Sigmoid colon (tissue), 7 donors: ENCODE measurements at regions of chr1 and their contacts with region 1.

Region 1: GRCh38 chr1:180863158-180863775 is 49.4 kb upstream of the KIAA1614 start:
- DNase-seq: no peak
- H3K4me3 ChIP-seq: no peak overlapping the region
- H3K27ac ChIP-seq: no peak overlapping the region
- H3K4me1 ChIP-seq: no peaks in the 10 kb centered on the region
- H3K27me3 ChIP-seq: no peaks in the 10 kb centered on the region
- CTCF ChIP-seq: peak; percentile 59 to 70 (median 64)
- EP300 ChIP-seq: no peak
- POLR2A ChIP-seq: no peak

Region 2: DNA sequence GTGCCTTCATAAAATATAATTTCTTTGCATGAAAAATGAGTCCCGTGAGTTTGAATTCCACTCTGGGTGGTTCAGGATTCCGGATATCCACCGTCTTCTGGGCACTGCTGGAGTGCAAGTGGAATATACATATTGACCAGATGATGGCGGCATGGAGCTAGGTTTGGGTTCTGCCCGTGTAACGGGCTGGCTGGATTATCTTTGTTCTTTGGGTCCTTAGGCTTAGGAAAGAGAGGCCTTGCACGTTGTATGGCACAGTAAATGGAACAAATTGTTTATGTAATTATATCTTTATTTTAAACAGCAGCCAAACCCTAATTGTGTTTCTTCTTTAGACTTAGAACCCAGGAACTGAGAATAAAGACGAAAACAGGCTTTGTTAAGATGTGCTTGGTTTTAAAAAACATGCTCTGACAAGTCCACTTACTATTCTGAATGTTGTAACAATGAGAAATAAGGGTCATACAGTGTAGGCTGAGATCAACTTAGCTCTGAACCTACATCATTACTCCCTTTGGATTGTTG is 347.3 kb before region 1 on chr1:
- intact Hi-C with region 1: loop called (anchors 5 kb)
- DNase-seq: peak; percentile 86
- H3K4me3 ChIP-seq: no peak overlapping the region
- H3K27ac ChIP-seq: no peak overlapping the region
- H3K4me1 ChIP-seq: peaks cover 0 to 9% (median 0%) of the 10 kb centered on the region in 4 donors
- H3K27me3 ChIP-seq: no peaks in the 10 kb centered on the region
- CTCF ChIP-seq: peak; percentile 46 to 79 (median 72)
- EP300 ChIP-seq: no peak
- POLR2A ChIP-seq: no peak

Region 3: DNA sequence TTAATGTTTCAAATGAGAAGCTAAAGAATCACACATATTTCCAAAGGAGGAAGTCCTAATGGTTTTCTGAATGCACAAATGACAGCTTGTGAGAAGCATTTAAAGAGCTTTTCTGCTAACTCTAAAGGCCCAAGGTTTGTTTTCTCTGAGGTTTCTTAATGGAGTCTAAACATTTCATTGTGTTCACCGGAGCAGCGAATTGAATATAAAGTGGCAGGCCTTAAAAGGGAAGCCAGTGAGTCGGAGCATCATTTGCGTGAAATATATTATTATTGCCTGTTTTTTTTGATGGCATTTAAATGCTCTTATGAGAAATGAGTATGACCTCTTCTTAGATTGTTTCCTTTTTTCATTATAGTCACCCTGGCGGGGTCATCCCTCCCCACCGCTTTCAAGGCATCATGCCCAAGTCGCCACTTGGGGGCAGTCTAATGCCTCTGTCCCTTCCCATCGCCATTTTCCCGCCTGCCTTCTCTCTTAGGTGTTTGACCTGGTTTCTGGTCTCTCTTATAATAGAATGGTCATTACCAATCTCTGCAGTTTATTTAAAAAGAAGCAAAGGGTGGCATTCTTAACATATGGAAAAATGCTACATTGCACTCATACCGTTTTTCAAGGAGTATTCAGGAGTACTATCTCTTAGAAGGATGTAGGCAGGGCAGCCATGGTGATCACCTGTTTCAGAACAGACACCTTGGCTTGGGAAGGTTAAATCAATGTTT is 329.8 kb before region 1 on chr1:
- intact Hi-C with region 1: loop called (anchors 5 kb)
- DNase-seq: peak; percentile 78
- H3K4me3 ChIP-seq: no peak overlapping the region
- H3K27ac ChIP-seq: no peak overlapping the region
- H3K4me1 ChIP-seq: no peaks in the 10 kb centered on the region
- H3K27me3 ChIP-seq: no peaks in the 10 kb centered on the region
- CTCF ChIP-seq: peak; percentile 55 to 81 (median 68)
- EP300 ChIP-seq: no peak
- POLR2A ChIP-seq: no peak

Region 4: DNA sequence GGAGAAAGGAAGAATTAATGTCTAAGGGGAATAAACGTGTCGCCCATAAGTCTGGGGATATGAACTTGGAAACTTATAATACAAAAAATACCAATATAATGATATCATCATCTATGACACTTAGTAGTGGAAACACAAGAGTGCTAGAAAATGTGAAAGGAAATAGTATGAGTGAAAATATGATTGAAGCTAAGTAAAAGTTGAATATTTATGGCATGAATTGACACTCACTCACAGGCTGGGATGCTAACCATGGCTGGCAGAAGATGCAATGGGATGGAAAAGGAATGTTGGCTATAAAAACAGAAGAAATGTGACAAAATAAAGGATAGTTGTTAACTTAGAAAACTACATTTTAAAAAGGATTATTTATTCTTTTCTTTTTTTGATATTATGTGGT is 111.3 kb before region 1 on chr1:
- intact Hi-C with region 1: no loop called
- DNase-seq: no peak
- H3K4me3 ChIP-seq: no peak overlapping the region
- H3K27ac ChIP-seq: no peak overlapping the region
- H3K4me1 ChIP-seq: no peaks in the 10 kb centered on the region
- H3K27me3 ChIP-seq: no peaks in the 10 kb centered on the region
- CTCF ChIP-seq: no peak
- EP300 ChIP-seq: no peak
- POLR2A ChIP-seq: no peak

Region 5: DNA sequence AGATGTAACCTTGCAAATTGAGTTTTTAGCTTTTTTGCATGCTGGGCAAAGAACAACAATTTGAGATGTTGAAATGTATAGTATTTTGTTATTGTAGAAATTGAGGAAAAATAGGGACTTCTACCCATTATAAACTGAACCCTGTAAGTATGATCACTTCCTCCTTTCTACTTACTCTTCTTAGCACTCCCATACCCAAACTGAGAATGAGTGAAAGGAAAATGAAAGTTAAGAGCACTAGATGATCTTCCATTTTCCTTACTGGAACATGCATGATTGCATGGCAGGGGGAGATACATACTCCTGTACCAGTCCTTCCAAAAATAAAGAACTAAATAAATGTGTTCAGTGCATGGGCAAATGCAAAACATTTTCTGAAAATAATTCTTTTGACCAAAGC is 58.0 kb before region 1 on chr1:
- intact Hi-C with region 1: no loop called
- DNase-seq: no peak
- H3K4me3 ChIP-seq: no peak overlapping the region
- H3K27ac ChIP-seq: no peak overlapping the region
- H3K4me1 ChIP-seq: no peaks in the 10 kb centered on the region
- H3K27me3 ChIP-seq: no peaks in the 10 kb centered on the region
- CTCF ChIP-seq: no peak
- EP300 ChIP-seq: no peak
- POLR2A ChIP-seq: no peak

Region 6: GRCh38 chr1:180997843-180998504 is 134.7 kb after region 1 on chr1:
- intact Hi-C with region 1: no loop called
- DNase-seq: no peak
- H3K4me3 ChIP-seq: no peak overlapping the region
- H3K27ac ChIP-seq: no peak overlapping the region
- H3K4me1 ChIP-seq: peaks cover 0 to 11% (median 9%) of the 10 kb centered on the region in 4 donors
- H3K27me3 ChIP-seq: no peaks in the 10 kb centered on the region
- CTCF ChIP-seq: no peak
- EP300 ChIP-seq: no peak
- POLR2A ChIP-seq: no peak